ENCODE measurements at regions of chr6 and their contacts with region 1.

Region 1: GRCh38 chr6:7725849-7726415 is at the start of gene BMP6:
- DNase-seq: peak; percentile 26
- H3K4me3 ChIP-seq: peak within 1 kb of the TSS; percentile 63
- CTCF ChIP-seq: no peak

Region 2: DNA sequence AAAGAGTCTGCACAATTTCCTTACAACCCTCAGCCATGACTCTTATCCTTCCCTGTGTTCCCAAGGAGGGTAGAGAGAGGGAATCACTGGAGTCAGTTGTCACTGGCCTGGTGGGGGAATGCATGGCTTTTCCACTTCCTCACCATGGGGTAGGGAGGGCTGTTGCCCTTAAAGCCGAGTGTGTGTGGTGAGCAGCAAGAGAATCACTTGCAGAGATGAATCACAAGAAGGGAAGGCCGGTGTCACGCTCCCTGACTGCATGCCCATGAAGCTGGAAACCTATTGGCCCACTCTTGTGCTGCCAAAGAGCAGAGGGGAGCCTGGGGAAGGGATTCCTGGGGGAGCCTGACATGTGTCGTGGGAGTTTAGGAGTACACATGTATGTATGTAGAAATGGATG is 18.1 kb before region 1 on chr6:
- CTCF ChIA-PET with region 1: interaction called, 16 read pairs
- POLR2A ChIA-PET with region 1: no interaction called
- DNase-seq: peak; percentile 26
- H3K4me3 ChIP-seq: no peak overlapping the region
- CTCF ChIP-seq: no peak

Region 3: DNA sequence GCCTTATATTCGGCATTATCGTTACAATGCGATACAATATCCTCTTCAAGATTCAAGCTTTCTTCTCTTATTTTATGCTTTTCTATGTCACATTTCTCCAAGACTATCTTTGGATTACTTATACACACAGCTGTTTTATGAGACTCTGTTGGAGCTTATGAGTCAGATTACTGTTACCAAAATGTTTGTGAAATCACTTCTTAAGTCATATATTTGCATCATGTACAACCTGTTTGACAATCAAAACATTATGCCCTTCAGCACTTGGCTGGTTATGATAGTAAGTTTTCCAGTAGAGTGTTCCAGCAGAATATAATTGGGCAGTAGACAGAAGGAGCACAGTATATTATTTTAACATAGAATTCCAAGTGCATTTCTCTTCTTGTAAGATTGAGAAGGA is 35.1 kb after region 1 on chr6:
- CTCF ChIA-PET with region 1: interaction called, 12 read pairs
- POLR2A ChIA-PET with region 1: no interaction called
- DNase-seq: no peak
- H3K4me3 ChIP-seq: no peak overlapping the region
- CTCF ChIP-seq: no peak

Region 4: DNA sequence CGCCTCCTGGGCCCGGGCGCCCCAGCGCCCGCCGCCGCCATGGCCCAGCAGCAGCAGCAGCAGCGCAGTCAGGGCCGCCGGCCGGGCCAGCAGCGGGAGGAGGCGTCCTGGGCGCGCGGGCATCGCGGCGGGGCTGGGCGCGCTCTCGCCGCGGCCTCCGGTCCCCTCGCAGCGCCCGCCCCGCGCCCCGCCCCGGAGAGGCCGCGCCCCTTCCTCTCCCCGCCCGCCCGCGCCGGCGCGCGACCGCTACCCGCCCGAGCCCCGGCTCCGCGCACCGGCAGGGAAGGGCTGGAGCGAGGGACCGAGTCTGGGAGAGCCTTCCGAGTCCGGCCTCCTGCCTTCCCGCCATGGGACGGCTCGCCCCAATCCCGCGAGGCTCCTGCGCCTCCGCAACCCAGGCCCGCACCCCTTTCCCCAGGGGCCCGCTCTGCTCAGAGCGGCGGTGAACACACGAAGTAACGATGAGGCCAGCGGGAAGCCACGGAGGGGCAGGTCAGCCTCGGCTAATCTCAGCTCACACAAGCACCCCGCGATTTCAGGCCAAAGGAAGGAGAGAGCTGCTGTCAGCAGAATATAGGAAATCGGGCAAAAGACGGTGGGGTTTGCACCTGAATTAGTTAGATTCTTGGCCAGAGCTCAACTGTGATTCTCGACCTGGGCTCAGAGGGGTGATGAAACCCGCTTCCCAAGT is 184.9 kb after region 1 on chr6 and contains the start of gene TXNDC5:
- CTCF ChIA-PET with region 1: interaction called, 11 read pairs
- POLR2A ChIA-PET with region 1: no interaction called
- DNase-seq: no peak
- H3K4me3 ChIP-seq: peak within 1 kb of the TSS; percentile 78
- CTCF ChIP-seq: no peak

Region 5: GRCh38 chr6:8017276-8017701 is 291.4 kb after region 1 on chr6:
- CTCF ChIA-PET with region 1: interaction called, 328 read pairs
- POLR2A ChIA-PET with region 1: no interaction called
- DNase-seq: no peak
- H3K4me3 ChIP-seq: no peak overlapping the region
- CTCF ChIP-seq: no peak

Region 6: DNA sequence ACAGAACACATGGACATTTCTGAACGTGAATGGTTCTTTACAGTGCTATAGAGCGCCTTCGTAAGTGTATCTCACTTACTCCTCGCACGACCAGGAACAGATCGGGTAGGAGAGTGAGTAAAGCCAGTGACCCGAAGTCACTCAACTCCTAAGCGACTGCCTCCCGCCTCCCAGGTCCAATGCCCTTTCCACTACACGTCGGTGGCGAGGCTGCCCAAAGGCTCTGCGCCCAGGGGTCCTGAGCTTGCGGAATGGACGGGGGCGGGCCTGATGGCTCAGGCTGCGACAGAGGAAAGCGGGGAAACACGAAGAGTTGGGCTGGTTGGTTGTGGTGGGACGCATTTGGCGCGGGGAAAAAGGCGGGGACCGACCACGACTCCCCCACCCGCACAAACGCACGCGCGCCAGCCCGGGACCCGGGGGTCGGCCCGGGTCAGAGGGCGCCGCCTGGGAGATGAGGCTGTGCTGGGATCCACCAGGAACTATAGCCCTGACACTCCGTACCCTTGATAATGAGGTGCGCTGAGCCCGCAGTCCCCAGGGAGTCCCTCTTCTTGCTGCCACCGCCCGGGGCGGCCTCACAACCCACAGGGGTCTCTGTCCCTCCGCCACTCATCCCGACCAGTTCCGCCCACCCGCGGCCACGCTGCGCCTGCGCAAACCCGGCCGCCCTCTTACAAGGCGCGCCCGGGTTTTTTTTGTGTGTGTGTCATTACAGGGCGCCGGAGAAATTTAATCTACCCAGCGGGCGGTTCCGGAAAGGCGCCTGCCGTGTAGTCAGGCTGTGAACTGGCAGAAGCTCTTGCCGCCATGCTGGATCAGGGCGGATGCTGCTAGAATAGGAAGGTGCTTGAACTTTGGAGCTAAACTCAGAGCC is 338.1 kb after region 1 on chr6 and contains the start of gene BLOC1S5:
- CTCF ChIA-PET with region 1: interaction called, 211 read pairs
- POLR2A ChIA-PET with region 1: interaction called, 3 read pairs
- DNase-seq: peak; percentile 79
- H3K4me3 ChIP-seq: peak within 1 kb of the TSS; percentile 93
- CTCF ChIP-seq: peak; percentile 8